CD4-positive, alpha-beta memory T cell (primary cell): ENCODE measurements at regions of chr11 and their contacts with region 1.

Region 1: GRCh38 chr11:1694064-1694845 is 2.7 kb upstream of the KRTAP5-6 start:
- DNase-seq: peak; percentile 50 to 75 (median 70)
- H3K4me3 ChIP-seq: peak overlapping the region in 1 of 2 donors; percentile 19
- H3K4me3 Mint-ChIP-seq: peak overlapping the region in 1 of 8 donors; percentile 20
- H3K27ac ChIP-seq: no peak overlapping the region
- H3K27ac Mint-ChIP-seq: peak overlapping the region in 2 of 7 donors; percentile 18 to 46
- H3K4me1 ChIP-seq: peaks cover 11% of the 10 kb centered on the region
- H3K4me1 Mint-ChIP-seq: peaks cover 3 to 8% (median 4%) of the 10 kb centered on the region in 4 donors
- H3K27me3 ChIP-seq: peaks cover 4% of the 10 kb centered on the region
- H3K27me3 Mint-ChIP-seq: peaks cover 12 to 24% of the 10 kb centered on the region in 2 donors

Region 2: DNA sequence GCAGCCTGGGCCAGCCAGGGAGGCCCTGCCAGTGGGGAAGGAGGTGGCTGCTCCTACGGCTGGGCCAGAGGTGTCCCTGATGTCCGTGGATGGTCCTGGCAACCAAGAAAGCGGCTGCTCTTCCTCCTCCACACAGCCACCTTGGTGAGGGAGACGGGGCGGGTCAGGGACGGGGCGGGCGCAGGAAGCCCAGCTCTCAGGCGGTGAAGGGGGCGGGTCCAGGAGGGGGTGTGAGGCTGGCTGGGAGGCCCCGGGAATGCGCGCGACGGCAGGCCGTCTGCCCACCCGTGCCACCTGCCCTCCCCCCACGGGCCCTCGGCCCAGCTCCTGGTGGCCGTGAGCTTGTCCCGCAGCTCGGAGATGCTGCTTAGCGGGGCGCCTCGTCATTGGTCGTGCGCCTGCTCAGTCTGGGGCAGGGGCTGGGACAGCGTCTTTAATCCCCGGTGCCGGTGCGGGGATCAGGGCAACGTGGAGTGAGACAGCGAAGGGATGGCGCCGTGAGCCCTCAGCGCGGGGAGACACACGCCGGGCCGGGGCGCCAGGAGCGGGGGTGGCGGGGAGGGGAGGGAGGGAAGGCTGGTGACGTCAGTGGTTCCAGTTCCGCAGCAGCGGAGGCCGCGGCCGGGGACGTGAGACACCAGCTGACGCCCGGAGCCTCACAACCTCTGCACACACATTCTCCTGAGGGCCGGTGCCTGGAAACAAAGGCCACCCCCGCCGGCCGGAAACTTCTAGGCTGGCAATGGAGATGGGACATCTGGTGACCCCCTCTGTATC is 311.2 kb before region 1 on chr11:
- CTCF ChIA-PET with region 1: no interaction called
- POLR2A ChIA-PET with region 1: no interaction called
- intact Hi-C with region 1: no loop called
- DNase-seq: peak; percentile 72 to 86 (median 74)
- H3K4me3 ChIP-seq: peak overlapping the region in 1 of 2 donors; percentile 57
- H3K4me3 Mint-ChIP-seq: peak overlapping the region; percentile 77 to 90 (median 82)
- H3K27ac ChIP-seq: peak overlapping the region; percentile 79
- H3K27ac Mint-ChIP-seq: peak overlapping the region; percentile 87 to 94 (median 92)
- H3K4me1 ChIP-seq: no peaks in the 10 kb centered on the region
- H3K4me1 Mint-ChIP-seq: peaks cover 2 to 47% (median 10%) of the 10 kb centered on the region in 4 donors
- H3K27me3 ChIP-seq: no peaks in the 10 kb centered on the region
- H3K27me3 Mint-ChIP-seq: no peaks in the 10 kb centered on the region

Region 3: DNA sequence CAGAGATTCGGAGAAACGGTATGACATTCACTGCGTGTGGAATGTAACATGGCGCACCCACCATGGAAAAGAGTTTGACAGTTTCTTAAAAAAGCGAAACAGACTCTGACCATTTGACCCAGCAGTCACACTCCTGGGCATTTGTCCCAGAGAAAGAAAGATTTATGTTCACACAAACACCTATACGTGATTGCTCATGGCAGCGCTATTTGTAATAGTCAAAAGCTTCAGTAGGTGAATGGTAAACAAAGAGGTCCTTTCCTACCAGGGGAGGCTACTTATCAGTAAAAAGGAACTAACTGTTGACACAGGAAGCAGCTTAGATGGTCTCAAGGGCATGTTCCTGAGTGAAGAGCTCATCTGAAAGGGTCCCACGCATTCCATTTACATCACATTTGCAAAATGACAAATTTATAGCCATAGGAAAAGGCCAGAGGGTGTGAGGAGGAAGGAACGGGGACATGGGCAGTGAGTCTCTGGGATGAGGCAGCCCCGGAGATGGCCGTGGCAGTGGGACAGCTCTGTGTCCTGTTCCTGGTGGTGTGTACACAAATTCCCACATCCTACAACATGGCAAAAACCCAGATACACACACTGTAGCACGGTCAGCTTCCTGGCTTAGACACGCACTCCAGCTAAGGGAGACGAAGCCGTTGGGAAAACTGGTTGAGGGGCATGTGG is 11.9 kb before region 1 on chr11:
- CTCF ChIA-PET with region 1: interaction called, 29 read pairs
- POLR2A ChIA-PET with region 1: no interaction called
- intact Hi-C with region 1: no loop called
- DNase-seq: no peak
- H3K4me3 ChIP-seq: no peak overlapping the region
- H3K4me3 Mint-ChIP-seq: no peak overlapping the region
- H3K27ac ChIP-seq: no peak overlapping the region
- H3K27ac Mint-ChIP-seq: no peak overlapping the region
- H3K4me1 ChIP-seq: no peaks in the 10 kb centered on the region
- H3K4me1 Mint-ChIP-seq: no peaks in the 10 kb centered on the region
- H3K27me3 ChIP-seq: no peaks in the 10 kb centered on the region
- H3K27me3 Mint-ChIP-seq: peaks cover 8 to 10% of the 10 kb centered on the region in 2 donors

Region 4: GRCh38 chr11:1757861-1758610 is 63.8 kb after region 1 on chr11:
- CTCF ChIA-PET with region 1: interaction called, 12 read pairs
- POLR2A ChIA-PET with region 1: no interaction called
- intact Hi-C with region 1: no loop called
- DNase-seq: peak in 4 of 5 donors; percentile 39 to 44 (median 42)
- H3K4me3 ChIP-seq: peak overlapping the region in 1 of 2 donors; percentile 38
- H3K4me3 Mint-ChIP-seq: peak overlapping the region; percentile 66 to 82 (median 76)
- H3K27ac ChIP-seq: peak overlapping the region; percentile 44
- H3K27ac Mint-ChIP-seq: peak overlapping the region; percentile 61 to 93 (median 83)
- H3K4me1 ChIP-seq: peaks cover 82% of the 10 kb centered on the region
- H3K4me1 Mint-ChIP-seq: peaks cover 20 to 79% (median 54%) of the 10 kb centered on the region in 4 donors
- H3K27me3 ChIP-seq: no peaks in the 10 kb centered on the region
- H3K27me3 Mint-ChIP-seq: no peaks in the 10 kb centered on the region

Region 5: DNA sequence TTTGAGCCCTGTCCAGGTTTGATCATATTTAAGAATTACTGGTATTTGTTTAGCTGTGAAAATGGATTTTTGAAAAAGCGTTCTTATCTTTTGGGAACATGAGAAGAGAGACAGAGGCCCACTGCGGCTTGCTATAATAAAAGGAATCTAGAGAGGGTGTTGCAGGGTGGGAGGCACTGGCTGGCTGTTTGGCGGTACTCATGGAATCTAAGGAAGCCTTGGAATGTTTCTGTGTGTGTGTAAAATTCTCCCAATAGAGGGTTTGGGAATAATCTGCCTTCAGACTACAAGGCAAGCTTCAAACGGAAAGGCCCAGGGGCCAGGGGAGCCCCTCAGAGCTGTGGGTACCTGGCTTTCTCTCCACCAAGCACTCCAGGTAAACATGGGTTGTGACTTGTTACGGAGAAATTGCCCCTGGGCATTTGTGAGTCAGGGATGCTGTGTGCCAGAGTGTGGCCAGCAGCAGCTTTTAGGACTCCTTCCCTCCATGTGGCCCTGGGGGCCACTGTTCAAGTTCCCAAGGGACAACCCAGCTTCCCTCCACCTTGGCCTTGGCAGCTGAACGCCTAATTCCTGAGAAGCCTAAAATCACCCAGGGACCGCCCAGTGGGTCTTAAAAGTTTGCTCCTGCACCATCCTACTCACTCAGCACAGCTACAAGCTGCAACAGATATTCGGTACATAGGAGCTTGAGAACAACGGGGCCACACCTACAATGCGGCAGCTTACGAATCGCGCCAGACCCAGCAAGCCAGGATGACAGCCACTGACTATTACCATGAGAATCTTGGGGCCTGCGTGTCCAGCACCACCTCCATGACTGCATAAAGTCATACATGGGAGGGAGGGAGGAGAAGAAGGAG is 126.4 kb after region 1 on chr11:
- CTCF ChIA-PET with region 1: interaction called, 11 read pairs
- POLR2A ChIA-PET with region 1: no interaction called
- intact Hi-C with region 1: no loop called
- DNase-seq: no peak
- H3K4me3 ChIP-seq: no peak overlapping the region
- H3K4me3 Mint-ChIP-seq: no peak overlapping the region
- H3K27ac ChIP-seq: no peak overlapping the region
- H3K27ac Mint-ChIP-seq: no peak overlapping the region
- H3K4me1 ChIP-seq: no peaks in the 10 kb centered on the region
- H3K4me1 Mint-ChIP-seq: no peaks in the 10 kb centered on the region
- H3K27me3 ChIP-seq: no peaks in the 10 kb centered on the region
- H3K27me3 Mint-ChIP-seq: peaks cover 2 to 4% of the 10 kb centered on the region in 2 donors

Region 6: DNA sequence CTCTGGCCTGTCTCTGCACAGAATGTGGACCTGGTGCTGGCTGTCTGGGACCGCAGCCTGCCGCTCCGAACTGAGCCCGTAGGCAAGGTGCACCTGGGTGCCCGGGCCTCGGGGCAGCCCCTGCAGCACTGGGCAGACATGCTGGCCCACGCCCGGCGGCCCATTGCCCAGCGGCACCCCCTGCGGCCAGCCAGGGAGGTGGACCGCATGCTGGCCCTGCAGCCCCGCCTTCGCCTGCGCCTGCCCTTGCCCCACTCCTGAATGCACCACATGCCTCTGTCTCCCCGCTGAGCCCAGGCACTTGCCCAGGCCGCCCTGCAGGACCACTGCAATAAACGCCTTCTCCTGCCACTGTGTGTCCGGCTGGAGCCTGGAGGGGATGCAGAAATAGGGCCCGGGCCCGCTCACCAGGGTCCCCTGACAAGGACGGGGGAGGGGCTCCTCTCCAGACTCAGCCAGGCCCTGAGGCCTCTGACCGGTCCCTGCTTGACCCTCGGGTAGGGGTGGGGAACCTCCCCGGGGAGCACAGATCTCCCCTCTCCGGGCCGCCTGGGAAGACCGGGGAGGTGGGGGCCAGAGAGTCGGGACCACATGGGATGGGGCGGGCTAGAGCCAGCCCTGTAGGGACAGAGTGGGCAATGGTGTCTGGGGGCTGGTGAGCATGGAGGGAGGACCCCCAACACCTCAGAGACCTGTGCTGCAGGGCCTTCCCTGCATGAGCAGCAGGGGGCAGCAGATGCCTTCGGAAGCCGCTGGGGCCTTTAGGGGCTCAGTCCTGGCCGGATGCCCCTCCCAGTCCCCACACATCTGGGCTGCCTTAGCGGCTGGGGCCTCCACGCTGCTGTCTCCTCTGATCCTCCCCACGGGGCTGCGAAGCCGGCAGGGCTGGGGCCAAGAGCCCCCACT is 143.2 kb after region 1 on chr11:
- CTCF ChIA-PET with region 1: interaction called, 351 read pairs
- POLR2A ChIA-PET with region 1: interaction called, 25 read pairs
- intact Hi-C with region 1: loop called (anchors 1 kb)
- DNase-seq: peak; percentile 63 to 79 (median 75)
- H3K4me3 ChIP-seq: no peak overlapping the region
- H3K4me3 Mint-ChIP-seq: no peak overlapping the region
- H3K27ac ChIP-seq: no peak overlapping the region
- H3K27ac Mint-ChIP-seq: peak overlapping the region in 1 of 7 donors; percentile 30
- H3K4me1 ChIP-seq: peaks cover 20% of the 10 kb centered on the region
- H3K4me1 Mint-ChIP-seq: peaks cover 5 to 10% (median 6%) of the 10 kb centered on the region in 4 donors
- H3K27me3 ChIP-seq: no peaks in the 10 kb centered on the region
- H3K27me3 Mint-ChIP-seq: no peaks in the 10 kb centered on the region

Region 7: GRCh38 chr11:1882519-1883238 is 188.4 kb after region 1 on chr11:
- CTCF ChIA-PET with region 1: interaction called, 4 read pairs
- POLR2A ChIA-PET with region 1: interaction called, 3 read pairs
- intact Hi-C with region 1: loop called (anchors 10 kb)
- DNase-seq: peak; percentile 69 to 79 (median 72)
- H3K4me3 ChIP-seq: no peak overlapping the region
- H3K4me3 Mint-ChIP-seq: no peak overlapping the region
- H3K27ac ChIP-seq: peak overlapping the region; percentile 20
- H3K27ac Mint-ChIP-seq: peak overlapping the region in 3 of 7 donors; percentile 47 to 64 (median 61)
- H3K4me1 ChIP-seq: peaks cover 23% of the 10 kb centered on the region
- H3K4me1 Mint-ChIP-seq: peaks cover 3 to 16% (median 8%) of the 10 kb centered on the region in 4 donors
- H3K27me3 ChIP-seq: no peaks in the 10 kb centered on the region
- H3K27me3 Mint-ChIP-seq: no peaks in the 10 kb centered on the region

Region 8: GRCh38 chr11:2151500-2152257 is 457.4 kb after region 1 on chr11:
- CTCF ChIA-PET with region 1: interaction called, 89 read pairs
- POLR2A ChIA-PET with region 1: interaction called, 3 read pairs
- intact Hi-C with region 1: loop called (anchors 1 kb)
- DNase-seq: peak; percentile 76 to 84 (median 78)
- H3K4me3 ChIP-seq: no peak overlapping the region
- H3K4me3 Mint-ChIP-seq: peak overlapping the region; percentile 20 to 67 (median 48)
- H3K27ac ChIP-seq: no peak overlapping the region
- H3K27ac Mint-ChIP-seq: peak overlapping the region in 5 of 7 donors; percentile 22 to 55 (median 26)
- H3K4me1 ChIP-seq: peaks cover 6% of the 10 kb centered on the region
- H3K4me1 Mint-ChIP-seq: peaks cover 5 to 11% (median 7%) of the 10 kb centered on the region in 4 donors
- H3K27me3 ChIP-seq: peaks cover 11% of the 10 kb centered on the region
- H3K27me3 Mint-ChIP-seq: peaks cover 10 to 31% of the 10 kb centered on the region in 2 donors